Activated naive CD4-positive, alpha-beta T cell treated with anti-CD3 and anti-CD28 coated beads, Interleukin-2, amount 10 ng/mL, durations not matched to agents 7 days and 5 days (primary cell): ENCODE measurements at regions of chr1 and their contacts with region 1.

Region 1: GRCh38 chr1:156065212-156065611 is 4.3 kb downstream of the RAB25 start:
- DNase-seq: no peak
- H3K4me3 Mint-ChIP-seq: no peak overlapping the region
- H3K27ac Mint-ChIP-seq: no peak overlapping the region
- H3K4me1 Mint-ChIP-seq: peaks cover 8% of the 10 kb centered on the region
- H3K27me3 Mint-ChIP-seq: peaks cover 12% of the 10 kb centered on the region

Region 2: GRCh38 chr1:155834296-155834926 is 230.8 kb before region 1 on chr1:
- CTCF ChIA-PET with region 1: no interaction called
- DNase-seq: no peak
- H3K4me3 Mint-ChIP-seq: no peak overlapping the region
- H3K27ac Mint-ChIP-seq: no peak overlapping the region
- H3K4me1 Mint-ChIP-seq: peaks cover 34% of the 10 kb centered on the region
- H3K27me3 Mint-ChIP-seq: no peaks in the 10 kb centered on the region

Region 3: DNA sequence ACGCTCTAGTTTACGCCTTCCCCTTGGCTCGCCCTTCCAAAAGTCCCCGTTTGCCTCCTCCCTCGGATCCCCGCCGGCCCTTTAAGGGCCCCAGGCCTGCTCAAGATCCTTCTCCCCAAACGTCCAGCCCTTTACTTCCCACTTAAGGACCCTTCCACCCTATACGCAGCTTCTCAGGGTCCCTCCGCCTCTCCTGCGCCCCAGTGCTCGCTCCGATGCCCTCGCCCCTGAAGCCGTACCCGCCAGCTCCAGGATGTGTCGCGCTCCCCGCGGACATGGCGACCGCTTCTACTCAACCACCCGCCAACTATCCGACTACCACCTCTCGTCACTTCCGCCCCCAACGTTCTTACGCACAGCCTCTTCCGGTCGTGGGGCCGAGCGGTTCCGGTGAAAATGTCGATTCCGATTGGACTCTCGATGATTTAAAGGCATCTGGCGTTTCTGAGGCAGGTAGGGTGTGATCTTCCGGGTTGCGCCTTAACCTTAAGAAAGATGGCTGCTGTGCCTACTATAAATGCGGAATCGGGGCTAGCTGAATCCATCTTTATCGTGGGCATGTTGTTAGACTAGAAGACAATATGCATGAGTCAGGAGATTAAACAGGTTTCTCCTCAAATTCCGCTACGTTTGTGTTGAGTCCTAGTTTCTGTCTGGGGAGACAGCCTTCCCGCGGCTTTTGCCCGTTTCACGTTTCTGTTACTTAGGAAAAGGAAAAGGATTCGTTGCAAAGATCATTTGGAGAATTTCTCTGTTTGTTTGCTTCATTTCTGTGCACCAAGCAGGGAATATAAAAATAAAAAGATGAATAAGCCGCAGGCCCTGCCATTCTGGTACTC is 130.9 kb before region 1 on chr1 and contains the start of gene KHDC4:
- CTCF ChIA-PET with region 1: interaction called, 15 read pairs
- DNase-seq: peak; percentile 97
- H3K4me3 Mint-ChIP-seq: no peak within 1 kb of the TSS
- H3K27ac Mint-ChIP-seq: peak within 1 kb of the TSS; percentile 68
- H3K4me1 Mint-ChIP-seq: peaks cover 50% of the 10 kb centered on the region
- H3K27me3 Mint-ChIP-seq: no peaks in the 10 kb centered on the region

Region 4: GRCh38 chr1:156025877-156026276 is 39.3 kb before region 1 on chr1:
- CTCF ChIA-PET with region 1: interaction called, 12 read pairs
- DNase-seq: peak; percentile 57
- H3K4me3 Mint-ChIP-seq: no peak overlapping the region
- H3K27ac Mint-ChIP-seq: no peak overlapping the region
- H3K4me1 Mint-ChIP-seq: peaks cover 10% of the 10 kb centered on the region
- H3K27me3 Mint-ChIP-seq: peaks cover 19% of the 10 kb centered on the region

Region 5: DNA sequence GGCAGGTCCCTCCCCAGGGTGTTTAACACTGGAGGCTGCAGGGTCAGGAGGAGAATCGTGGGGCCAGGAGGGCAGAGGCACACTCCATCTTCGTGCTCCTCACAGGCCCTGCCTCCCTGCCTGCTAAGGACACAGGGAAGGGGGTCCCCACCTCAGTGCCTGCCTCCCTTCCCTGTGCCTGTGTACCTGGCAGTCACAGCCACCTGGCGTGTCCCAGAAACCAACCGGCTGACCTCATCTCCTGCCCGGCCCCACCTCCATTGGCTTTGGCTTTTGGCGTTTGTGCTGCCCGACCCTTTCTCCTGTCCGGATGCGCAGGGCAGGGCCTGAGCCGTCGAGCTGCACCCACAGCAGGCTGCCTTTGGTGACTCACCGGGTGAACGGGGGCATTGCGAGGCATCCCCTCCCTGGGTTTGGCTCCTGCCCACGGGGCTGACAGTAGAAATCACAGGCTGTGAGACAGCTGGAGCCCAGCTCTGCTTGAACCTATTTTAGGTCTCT is 176.1 kb after region 1 on chr1:
- CTCF ChIA-PET with region 1: no interaction called
- DNase-seq: no peak
- H3K4me3 Mint-ChIP-seq: no peak overlapping the region
- H3K27ac Mint-ChIP-seq: no peak overlapping the region
- H3K4me1 Mint-ChIP-seq: peaks cover 19% of the 10 kb centered on the region
- H3K27me3 Mint-ChIP-seq: peaks cover 3% of the 10 kb centered on the region